B cell (primary cell): ENCODE measurements at regions of chr1 and their contacts with region 1.

Region 1: GRCh38 chr1:76317299-76317900 is 242.9 kb downstream of the ST6GALNAC3 start:
- DNase-seq: no peak
- ATAC-seq: no peak
- H3K4me3 ChIP-seq: no peak overlapping the region
- H3K4me3 Mint-ChIP-seq: no peak overlapping the region
- H3K27ac ChIP-seq: no peak overlapping the region
- H3K27ac Mint-ChIP-seq: no peak overlapping the region
- H3K4me1 ChIP-seq: no peaks in the 10 kb centered on the region
- H3K4me1 Mint-ChIP-seq: no peaks in the 10 kb centered on the region
- H3K27me3 ChIP-seq: no peaks in the 10 kb centered on the region
- H3K27me3 Mint-ChIP-seq: no peaks in the 10 kb centered on the region
- CTCF ChIP-seq: no peak

Region 2: DNA sequence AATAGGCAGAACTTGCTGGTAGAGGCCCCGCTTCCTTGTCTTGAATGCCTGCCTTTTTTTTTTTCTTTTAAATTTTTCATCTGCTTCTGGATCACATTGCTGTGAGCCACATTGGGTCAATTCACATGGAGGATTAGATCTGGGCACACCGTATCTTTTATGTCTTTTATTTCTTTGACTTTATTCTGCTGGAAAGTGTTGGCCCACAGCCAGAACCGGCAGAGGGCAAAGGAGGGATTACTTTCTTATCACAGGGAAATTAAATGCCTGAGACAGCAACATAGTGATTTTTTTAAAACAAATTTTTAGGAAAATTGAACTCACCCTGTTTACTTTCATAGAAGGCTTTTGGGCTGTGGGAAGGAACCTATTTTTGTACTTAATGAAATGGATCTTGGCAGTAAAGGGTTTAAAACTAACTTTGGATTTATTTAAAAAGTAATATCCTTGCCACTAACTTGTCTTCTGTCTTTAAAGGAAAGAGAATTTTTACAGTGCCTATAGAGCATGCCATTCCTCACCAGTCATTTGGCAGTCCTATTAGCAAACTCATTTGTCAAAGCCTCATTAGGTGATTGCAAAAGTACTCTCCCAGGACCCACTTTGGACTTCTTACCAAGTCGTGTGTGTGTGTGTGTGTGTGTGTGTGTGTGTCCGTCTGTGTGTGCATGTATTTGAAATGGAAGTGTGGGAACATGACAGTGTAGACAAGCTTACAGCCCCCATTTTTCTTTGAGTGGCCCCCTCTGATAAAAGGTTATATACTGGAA is 174.4 kb before region 1 on chr1:
- CTCF ChIA-PET with region 1: no interaction called
- POLR2A ChIA-PET with region 1: no interaction called
- intact Hi-C with region 1: no loop called
- DNase-seq: no peak
- ATAC-seq: no peak
- H3K4me3 ChIP-seq: no peak overlapping the region
- H3K4me3 Mint-ChIP-seq: no peak overlapping the region
- H3K27ac ChIP-seq: no peak overlapping the region
- H3K27ac Mint-ChIP-seq: no peak overlapping the region
- H3K4me1 ChIP-seq: no peaks in the 10 kb centered on the region
- H3K4me1 Mint-ChIP-seq: no peaks in the 10 kb centered on the region
- H3K27me3 ChIP-seq: no peaks in the 10 kb centered on the region
- H3K27me3 Mint-ChIP-seq: peaks cover 6% of the 10 kb centered on the region
- CTCF ChIP-seq: no peak

Region 3: GRCh38 chr1:76229279-76230005 is 88.0 kb before region 1 on chr1:
- CTCF ChIA-PET with region 1: no interaction called
- POLR2A ChIA-PET with region 1: no interaction called
- intact Hi-C with region 1: no loop called
- DNase-seq: no peak
- ATAC-seq: no peak
- H3K4me3 ChIP-seq: no peak overlapping the region
- H3K4me3 Mint-ChIP-seq: no peak overlapping the region
- H3K27ac ChIP-seq: no peak overlapping the region
- H3K27ac Mint-ChIP-seq: no peak overlapping the region
- H3K4me1 ChIP-seq: peaks cover 10 to 23% of the 10 kb centered on the region in 2 donors
- H3K4me1 Mint-ChIP-seq: peaks cover 28% of the 10 kb centered on the region
- H3K27me3 ChIP-seq: no peaks in the 10 kb centered on the region
- H3K27me3 Mint-ChIP-seq: no peaks in the 10 kb centered on the region
- CTCF ChIP-seq: no peak

Region 4: DNA sequence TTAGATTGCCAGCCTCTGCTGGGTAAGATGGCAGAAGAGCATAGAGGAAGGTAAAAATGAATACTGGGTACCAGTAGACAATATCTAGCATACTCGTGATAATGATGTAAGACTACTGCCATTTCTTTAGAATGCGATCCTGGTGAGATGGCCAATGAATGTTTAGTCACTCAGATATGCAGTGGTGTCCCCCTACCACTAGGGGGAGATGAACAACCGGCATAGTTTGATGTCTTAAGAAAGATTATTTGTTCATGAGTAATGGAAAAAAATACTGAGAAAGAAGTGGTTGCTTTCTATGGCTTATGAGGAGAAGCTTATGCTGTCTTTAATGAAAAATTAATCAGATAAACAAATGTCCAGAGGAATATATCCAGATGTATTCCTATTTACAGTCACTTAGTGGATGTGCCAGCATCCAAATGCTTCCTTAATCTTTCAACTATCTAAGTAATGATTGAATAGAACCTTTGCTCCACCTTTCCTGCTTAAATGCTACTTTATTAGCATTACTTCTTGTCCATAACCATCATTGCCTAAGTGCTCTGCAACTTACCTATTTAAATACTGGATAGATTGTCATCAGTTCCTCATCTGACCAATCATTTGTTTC is 13.7 kb after region 1 on chr1:
- CTCF ChIA-PET with region 1: interaction called, 17 read pairs
- POLR2A ChIA-PET with region 1: no interaction called
- intact Hi-C with region 1: no loop called
- DNase-seq: peak; percentile 49
- ATAC-seq: peak; percentile 47
- H3K4me3 ChIP-seq: no peak overlapping the region
- H3K4me3 Mint-ChIP-seq: no peak overlapping the region
- H3K27ac ChIP-seq: no peak overlapping the region
- H3K27ac Mint-ChIP-seq: no peak overlapping the region
- H3K4me1 ChIP-seq: no peaks in the 10 kb centered on the region
- H3K4me1 Mint-ChIP-seq: no peaks in the 10 kb centered on the region
- H3K27me3 ChIP-seq: no peaks in the 10 kb centered on the region
- H3K27me3 Mint-ChIP-seq: no peaks in the 10 kb centered on the region
- CTCF ChIP-seq: peak; percentile 98

Region 5: DNA sequence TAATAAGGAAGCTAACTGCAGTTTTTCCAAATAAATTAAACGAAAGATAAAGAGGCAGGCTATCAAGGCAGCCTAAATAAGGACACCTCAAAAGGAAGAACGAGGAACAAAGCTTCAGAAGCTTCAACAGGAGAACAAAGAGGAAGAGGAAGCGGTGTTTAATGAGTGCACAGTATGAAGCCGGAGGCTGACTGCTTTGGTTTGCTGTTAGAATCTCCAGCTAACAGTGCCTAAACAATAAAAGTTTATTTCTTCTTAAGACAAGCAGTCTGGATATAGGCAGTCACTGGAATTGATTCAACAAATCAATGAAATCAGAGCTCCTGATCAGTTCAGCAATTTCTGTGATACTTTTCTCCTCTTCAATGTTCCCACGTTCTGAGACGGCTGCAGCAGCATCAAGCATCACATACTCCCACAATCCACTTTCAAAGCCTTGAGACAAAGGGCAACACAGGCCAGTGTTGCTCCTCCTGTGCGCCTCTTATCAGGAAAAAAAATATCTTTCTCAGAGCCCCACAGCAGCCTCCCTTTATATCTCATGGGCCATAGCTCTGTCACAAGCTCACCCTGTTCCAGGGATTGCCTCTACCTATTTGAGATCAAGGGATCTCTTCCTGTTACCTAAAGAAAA is 184.3 kb after region 1 on chr1:
- CTCF ChIA-PET with region 1: no interaction called
- POLR2A ChIA-PET with region 1: no interaction called
- intact Hi-C with region 1: no loop called
- DNase-seq: no peak
- ATAC-seq: no peak
- H3K4me3 ChIP-seq: no peak overlapping the region
- H3K4me3 Mint-ChIP-seq: no peak overlapping the region
- H3K27ac ChIP-seq: no peak overlapping the region
- H3K27ac Mint-ChIP-seq: no peak overlapping the region
- H3K4me1 ChIP-seq: peaks cover 0 to 5% of the 10 kb centered on the region in 2 donors
- H3K4me1 Mint-ChIP-seq: peaks cover 2% of the 10 kb centered on the region
- H3K27me3 ChIP-seq: no peaks in the 10 kb centered on the region
- H3K27me3 Mint-ChIP-seq: no peaks in the 10 kb centered on the region
- CTCF ChIP-seq: no peak